IMR-90 (cell line): ENCODE measurements at regions of chr1 and their contacts with region 1.

Region 1: DNA sequence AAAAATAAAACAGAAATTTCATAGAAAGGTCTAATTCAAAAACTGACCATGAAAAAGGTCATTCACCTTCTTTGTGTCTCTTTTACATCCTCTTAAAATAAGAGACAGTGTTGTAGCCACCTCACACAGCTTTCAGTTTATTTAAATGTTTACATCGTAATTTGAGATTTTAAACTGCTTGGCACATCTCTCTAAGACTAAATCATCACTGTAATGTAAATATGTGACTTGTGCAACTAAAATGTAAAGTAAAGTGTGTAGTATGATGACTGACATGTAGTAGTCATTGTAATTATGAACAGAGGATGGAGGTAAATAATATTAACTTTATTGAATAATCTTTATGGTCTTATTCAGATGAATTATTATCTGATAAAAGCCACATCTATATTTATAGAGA is 283.9 kb downstream of the KCNT2 start:
- DNase-seq: peak; percentile 46
- ATAC-seq: peak; percentile 48
- H3K4me3 ChIP-seq: no peak overlapping the region
- H3K27ac ChIP-seq: no peak overlapping the region
- H3K4me1 ChIP-seq: no peaks in the 10 kb centered on the region
- H3K27me3 ChIP-seq: no peaks in the 10 kb centered on the region
- CTCF ChIP-seq: no peak
- POLR2A ChIP-seq: no peak
- RAD21 ChIP-seq: no peak

Region 2: GRCh38 chr1:195849180-195849579 is 475.2 kb before region 1 on chr1:
- CTCF ChIA-PET with region 1: no interaction called
- POLR2A ChIA-PET with region 1: no interaction called
- dilution Hi-C with region 1: no loop called
- in situ Hi-C with region 1: no loop called
- intact Hi-C with region 1: no loop called
- DNase-seq: no peak
- ATAC-seq: no peak
- H3K4me3 ChIP-seq: no peak overlapping the region
- H3K27ac ChIP-seq: no peak overlapping the region
- H3K4me1 ChIP-seq: no peaks in the 10 kb centered on the region
- H3K27me3 ChIP-seq: no peaks in the 10 kb centered on the region
- CTCF ChIP-seq: no peak
- POLR2A ChIP-seq: no peak
- RAD21 ChIP-seq: no peak

Region 3: GRCh38 chr1:196355206-196355786 is 31.0 kb after region 1 on chr1:
- CTCF ChIA-PET with region 1: no interaction called
- POLR2A ChIA-PET with region 1: no interaction called
- dilution Hi-C with region 1: no loop called
- in situ Hi-C with region 1: no loop called
- intact Hi-C with region 1: loop called (anchors 5 kb)
- DNase-seq: peak; percentile 25
- ATAC-seq: no peak
- H3K4me3 ChIP-seq: no peak overlapping the region
- H3K27ac ChIP-seq: no peak overlapping the region
- H3K4me1 ChIP-seq: no peaks in the 10 kb centered on the region
- H3K27me3 ChIP-seq: no peaks in the 10 kb centered on the region
- CTCF ChIP-seq: peak; percentile 61
- POLR2A ChIP-seq: no peak
- RAD21 ChIP-seq: peak; percentile 59